CD8-positive, alpha-beta memory T cell (primary cell): ENCODE measurements at regions of chr3 and their contacts with region 1.

Region 1: GRCh38 chr3:73018790-73019441 is 22.3 kb downstream of the PPP4R2 start:
- DNase-seq: no peak
- H3K4me3 ChIP-seq: no peak overlapping the region
- H3K4me3 Mint-ChIP-seq: peak overlapping the region in 2 of 7 donors; percentile 2 to 18
- H3K27ac ChIP-seq: no peak overlapping the region
- H3K27ac Mint-ChIP-seq: peak overlapping the region in 2 of 8 donors; percentile 4 to 7
- H3K4me1 ChIP-seq: peaks cover 36% of the 10 kb centered on the region
- H3K4me1 Mint-ChIP-seq: peaks cover 64 to 81% (median 78%) of the 10 kb centered on the region in 3 donors
- H3K27me3 ChIP-seq: no peaks in the 10 kb centered on the region
- H3K27me3 Mint-ChIP-seq: no peaks in the 10 kb centered on the region

Region 2: GRCh38 chr3:72997421-72997961 is 21.4 kb before region 1 on chr3:
- CTCF ChIA-PET with region 1: interaction called, 4 read pairs
- POLR2A ChIA-PET with region 1: interaction called, 12 read pairs
- DNase-seq: peak in 4 of 5 donors; percentile 16 to 53 (median 46)
- H3K4me3 ChIP-seq: peak overlapping the region; percentile 59
- H3K4me3 Mint-ChIP-seq: peak overlapping the region; percentile 83 to 94 (median 90)
- H3K27ac ChIP-seq: peak overlapping the region; percentile 55
- H3K27ac Mint-ChIP-seq: peak overlapping the region; percentile 80 to 98 (median 92)
- H3K4me1 ChIP-seq: peaks cover 49% of the 10 kb centered on the region
- H3K4me1 Mint-ChIP-seq: peaks cover 46 to 59% (median 51%) of the 10 kb centered on the region in 3 donors
- H3K27me3 ChIP-seq: no peaks in the 10 kb centered on the region
- H3K27me3 Mint-ChIP-seq: no peaks in the 10 kb centered on the region

Region 3: DNA sequence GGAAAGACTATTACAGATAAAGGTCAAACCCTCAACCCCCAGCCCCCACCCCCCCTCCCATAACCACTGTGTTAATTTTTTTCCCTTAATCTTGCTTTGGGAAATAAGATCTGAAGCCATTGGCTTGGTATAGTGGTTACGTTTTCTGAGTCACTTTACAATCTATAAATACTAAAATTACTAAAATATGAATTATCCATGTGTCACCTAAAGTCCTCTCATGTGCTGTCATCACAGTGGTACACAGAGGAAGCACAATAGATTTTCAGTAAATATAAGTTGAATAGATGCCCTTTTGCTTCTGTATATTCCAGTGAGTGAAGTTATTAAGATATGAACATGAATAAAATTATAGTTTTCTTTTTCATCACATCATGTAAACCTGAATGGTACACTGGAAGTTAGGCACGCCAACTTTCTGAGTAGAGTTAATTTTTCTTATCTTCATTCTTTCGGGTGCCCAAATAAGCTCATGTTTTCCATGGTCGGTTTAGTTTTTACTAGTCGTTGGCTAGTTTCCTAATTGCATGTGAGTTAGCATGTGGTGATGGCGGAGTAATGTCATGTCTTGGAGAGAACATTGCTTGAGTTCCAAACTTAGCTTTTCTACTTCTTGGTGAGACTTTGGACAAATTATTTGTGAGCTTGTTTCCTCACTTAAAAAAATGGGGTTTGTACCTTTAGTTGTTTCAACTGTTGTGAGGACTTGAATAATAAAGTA is 10.8 kb before region 1 on chr3:
- CTCF ChIA-PET with region 1: no interaction called
- POLR2A ChIA-PET with region 1: interaction called, 11 read pairs
- DNase-seq: no peak
- H3K4me3 ChIP-seq: no peak overlapping the region
- H3K4me3 Mint-ChIP-seq: peak overlapping the region in 5 of 7 donors; percentile 22 to 54 (median 36)
- H3K27ac ChIP-seq: no peak overlapping the region
- H3K27ac Mint-ChIP-seq: peak overlapping the region in 5 of 8 donors; percentile 13 to 59 (median 35)
- H3K4me1 ChIP-seq: peaks cover 25% of the 10 kb centered on the region
- H3K4me1 Mint-ChIP-seq: peaks cover 73 to 99% (median 92%) of the 10 kb centered on the region in 3 donors
- H3K27me3 ChIP-seq: no peaks in the 10 kb centered on the region
- H3K27me3 Mint-ChIP-seq: no peaks in the 10 kb centered on the region

Region 4: DNA sequence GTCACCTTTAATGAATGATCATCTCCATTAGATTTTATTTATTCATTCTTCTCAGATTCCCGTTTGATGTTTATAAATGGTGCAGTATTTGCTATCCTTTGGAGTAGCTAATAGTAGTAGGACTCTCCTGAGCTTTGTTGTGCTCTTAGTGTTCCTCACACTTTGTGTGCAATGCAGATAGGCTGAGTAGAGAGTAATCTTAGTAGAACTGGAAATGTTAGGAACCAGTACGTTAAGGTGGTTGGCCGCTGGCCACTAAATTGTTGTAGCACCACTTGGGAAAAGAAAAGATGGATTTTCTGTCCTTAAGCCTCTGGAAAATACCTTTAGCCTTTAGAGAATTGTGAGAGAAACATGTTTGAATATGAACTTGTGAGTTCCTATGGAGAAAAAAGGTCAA is 22.6 kb after region 1 on chr3:
- CTCF ChIA-PET with region 1: no interaction called
- POLR2A ChIA-PET with region 1: no interaction called
- DNase-seq: no peak
- H3K4me3 ChIP-seq: no peak overlapping the region
- H3K4me3 Mint-ChIP-seq: peak overlapping the region in 2 of 7 donors; percentile 1 to 3
- H3K27ac ChIP-seq: no peak overlapping the region
- H3K27ac Mint-ChIP-seq: peak overlapping the region in 4 of 8 donors; percentile 17 to 73 (median 52)
- H3K4me1 ChIP-seq: peaks cover 28% of the 10 kb centered on the region
- H3K4me1 Mint-ChIP-seq: peaks cover 73 to 96% (median 86%) of the 10 kb centered on the region in 3 donors
- H3K27me3 ChIP-seq: no peaks in the 10 kb centered on the region
- H3K27me3 Mint-ChIP-seq: no peaks in the 10 kb centered on the region